ENCODE measurements at regions of chr7 and their contacts with region 1.

Region 1: GRCh38 chr7:25886387-25887240 is 265.4 kb upstream of the NFE2L3 start:
- DNase-seq: peak in 34 of 42 donors; percentile 16 to 86 (median 50)

Region 2: DNA sequence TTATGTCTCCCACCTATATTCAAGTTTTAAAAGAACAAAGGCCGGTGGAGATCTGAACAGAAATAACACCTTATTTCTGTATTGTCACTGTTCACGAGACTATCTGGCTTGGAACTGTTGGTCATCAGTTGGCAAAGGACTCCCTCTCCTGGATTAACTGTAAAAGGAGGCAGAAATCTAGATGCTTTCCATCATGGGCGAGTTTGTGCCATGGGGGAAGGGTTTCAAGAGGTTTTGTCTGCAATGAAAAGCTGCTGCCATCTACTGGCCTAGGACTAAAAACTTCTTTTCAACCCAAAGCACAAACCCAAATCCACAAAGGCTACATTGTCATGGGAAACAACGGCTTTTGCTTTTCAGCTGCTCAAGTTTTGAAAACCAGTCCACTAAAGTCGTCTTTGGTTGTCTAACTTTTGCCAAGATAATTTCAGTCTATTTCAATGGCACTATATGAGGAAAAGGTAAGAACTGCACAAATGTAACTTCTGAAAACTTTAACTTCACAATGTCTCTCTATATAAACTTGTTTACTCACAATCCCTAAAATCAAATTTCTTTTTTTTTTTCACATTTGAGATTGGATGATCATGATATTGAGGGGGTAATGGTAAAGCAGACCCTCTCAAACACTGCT is 781.0 kb after region 1 on chr7:
- intact Hi-C with region 1: loop called (anchors 10 kb)
- DNase-seq: peak in 41 of 42 donors; percentile 43 to 94 (median 78)